SK-N-SH (cell line): ENCODE measurements at regions of chr19 and their contacts with region 1.

Region 1: DNA sequence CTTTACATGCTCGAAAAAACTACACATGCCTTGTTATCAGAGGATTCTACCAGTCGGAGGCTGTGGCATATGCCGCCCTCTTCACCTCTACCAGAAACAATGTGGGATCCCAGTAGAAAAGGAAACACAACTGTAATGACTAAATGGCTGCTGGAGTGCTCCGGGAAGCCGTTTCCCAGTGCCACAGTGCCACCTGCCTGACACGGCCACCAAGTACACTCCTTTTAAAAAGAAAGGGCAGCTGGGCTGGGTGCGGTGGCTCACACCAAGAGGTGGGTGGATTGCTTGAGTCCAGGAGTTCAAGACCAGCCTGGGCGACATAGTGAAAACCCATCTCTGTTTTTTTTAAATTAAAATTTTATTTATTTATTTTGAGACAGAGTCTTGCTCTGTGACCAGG is 67.3 kb downstream of the TRPM4 start:
- DNase-seq: peak; percentile 66
- H3K4me3 ChIP-seq: peak overlapping the region in 1 of 2 experiments; percentile 30; a peak in 1 of 4 replicates
- H3K27ac ChIP-seq: no peak overlapping the region
- H3K4me1 ChIP-seq: no peaks in the 10 kb centered on the region; a peak in 1 of 4 replicates
- H3K27me3 ChIP-seq: peaks cover 15% of the 10 kb centered on the region; the same call in 1 of the 2 replicates
- CTCF ChIP-seq: peak; percentile 65
- EP300 ChIP-seq: no peak
- RAD21 ChIP-seq: peak; percentile 77

Region 2: DNA sequence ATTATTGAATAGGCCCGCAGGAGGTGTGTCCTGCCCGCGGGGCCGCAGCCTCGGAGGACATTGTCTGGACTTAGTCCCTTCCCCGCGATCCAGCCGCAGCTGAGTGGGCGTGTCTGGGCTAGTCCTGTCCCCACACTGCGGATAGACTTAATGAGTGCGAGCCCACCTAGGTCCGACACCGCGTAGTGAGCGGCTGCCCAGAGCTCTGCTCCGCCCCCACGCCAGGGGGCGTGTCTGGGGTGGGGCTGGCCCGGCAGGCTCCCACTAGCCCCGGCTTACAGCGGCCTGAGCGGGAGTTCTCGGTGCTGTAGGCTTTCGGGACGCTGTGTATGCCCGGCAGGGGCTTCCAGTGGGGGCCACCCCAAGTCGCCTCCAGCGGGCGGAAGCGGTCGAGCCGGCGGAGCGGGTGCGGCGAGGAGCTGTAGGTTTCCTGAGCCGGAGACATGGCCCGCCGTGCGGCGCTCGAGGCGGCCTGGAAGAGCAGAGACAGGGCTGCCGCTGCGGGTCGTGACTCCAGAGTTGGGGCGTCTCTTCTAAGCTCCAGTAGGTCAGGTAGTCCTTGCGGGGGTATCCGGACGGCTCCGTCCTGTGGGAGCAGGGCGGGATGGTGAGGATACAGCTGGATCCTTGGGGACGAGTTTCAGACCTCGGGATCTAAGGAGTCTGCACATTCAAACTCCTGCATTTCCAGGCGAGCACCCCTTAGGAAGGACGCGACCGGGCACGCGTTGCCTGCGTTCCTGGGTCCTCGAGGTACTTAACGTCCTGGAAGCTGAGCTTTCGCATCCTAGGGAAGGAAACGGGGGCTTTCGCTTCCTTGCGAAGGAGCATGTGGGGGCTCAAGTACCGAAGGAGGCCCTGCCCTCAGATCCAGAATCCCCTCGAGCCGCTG is 168.6 kb before region 1 on chr19:
- CTCF ChIA-PET with region 1: interaction called, 13 read pairs
- POLR2A ChIA-PET with region 1: no interaction called
- DNase-seq: peak; percentile 91
- H3K4me3 ChIP-seq: peak overlapping the region; percentile 55 to 71
- H3K27ac ChIP-seq: peak overlapping the region in 1 of 2 experiments; percentile 40; a peak in 1 of 4 replicates
- H3K4me1 ChIP-seq: peaks cover 0 to 15% of the 10 kb centered on the region in 2 experiments; a peak in 2 of 4 replicates
- H3K27me3 ChIP-seq: no peaks in the 10 kb centered on the region
- CTCF ChIP-seq: peak; percentile 39
- EP300 ChIP-seq: no peak
- RAD21 ChIP-seq: no peak

Region 3: GRCh38 chr19:49210108-49210900 is 14.6 kb before region 1 on chr19:
- CTCF ChIA-PET with region 1: interaction called, 48 read pairs
- POLR2A ChIA-PET with region 1: no interaction called
- DNase-seq: peak; percentile 69
- H3K4me3 ChIP-seq: no peak overlapping the region; a peak in 1 of 4 replicates
- H3K27ac ChIP-seq: no peak overlapping the region
- H3K4me1 ChIP-seq: no peaks in the 10 kb centered on the region; a peak in 1 of 4 replicates
- H3K27me3 ChIP-seq: no peaks in the 10 kb centered on the region
- CTCF ChIP-seq: no peak
- EP300 ChIP-seq: no peak
- RAD21 ChIP-seq: no peak

Region 4: GRCh38 chr19:49301165-49301865 is 76.5 kb after region 1 on chr19:
- CTCF ChIA-PET with region 1: interaction called, 13 read pairs
- POLR2A ChIA-PET with region 1: no interaction called
- DNase-seq: peak; percentile 72
- H3K4me3 ChIP-seq: peak overlapping the region in 1 of 2 experiments; percentile 21; a peak in 2 of 4 replicates
- H3K27ac ChIP-seq: no peak overlapping the region
- H3K4me1 ChIP-seq: no peaks in the 10 kb centered on the region
- H3K27me3 ChIP-seq: no peaks in the 10 kb centered on the region; the same call in 1 of the 2 replicates
- CTCF ChIP-seq: peak; percentile 81
- EP300 ChIP-seq: no peak
- RAD21 ChIP-seq: peak; percentile 43